ENCODE measurements at regions of chr5 and their contacts with region 1.

Region 1: GRCh38 chr5:76641514-76642120 is 18.4 kb upstream of the F2RL2 start:
- DNase-seq: peak; percentile 16 to 78 (median 67)
- ATAC-seq: peak; percentile 54
- H3K4me3 ChIP-seq: no peak overlapping the region
- H3K4me3 Mint-ChIP-seq: no peak overlapping the region
- H3K27ac ChIP-seq: no peak overlapping the region
- H3K27ac Mint-ChIP-seq: no peak overlapping the region
- H3K4me1 ChIP-seq: no peaks in the 10 kb centered on the region
- H3K4me1 Mint-ChIP-seq: no peaks in the 10 kb centered on the region
- H3K27me3 ChIP-seq: no peaks in the 10 kb centered on the region
- H3K27me3 Mint-ChIP-seq: no peaks in the 10 kb centered on the region
- CTCF ChIP-seq: peak; percentile 74

Region 2: GRCh38 chr5:75734913-75735789 is 906.5 kb before region 1 on chr5:
- CTCF ChIA-PET with region 1: no interaction called
- POLR2A ChIA-PET with region 1: no interaction called
- intact Hi-C with region 1: loop called in 1 of 2 experiments (anchors 10 kb)
- DNase-seq: peak in 2 of 9 experiments; percentile 25 to 39
- ATAC-seq: no peak
- H3K4me3 ChIP-seq: no peak overlapping the region
- H3K4me3 Mint-ChIP-seq: no peak overlapping the region
- H3K27ac ChIP-seq: no peak overlapping the region
- H3K27ac Mint-ChIP-seq: no peak overlapping the region
- H3K4me1 ChIP-seq: no peaks in the 10 kb centered on the region
- H3K4me1 Mint-ChIP-seq: no peaks in the 10 kb centered on the region
- H3K27me3 ChIP-seq: no peaks in the 10 kb centered on the region
- H3K27me3 Mint-ChIP-seq: no peaks in the 10 kb centered on the region
- CTCF ChIP-seq: no peak

Region 3: DNA sequence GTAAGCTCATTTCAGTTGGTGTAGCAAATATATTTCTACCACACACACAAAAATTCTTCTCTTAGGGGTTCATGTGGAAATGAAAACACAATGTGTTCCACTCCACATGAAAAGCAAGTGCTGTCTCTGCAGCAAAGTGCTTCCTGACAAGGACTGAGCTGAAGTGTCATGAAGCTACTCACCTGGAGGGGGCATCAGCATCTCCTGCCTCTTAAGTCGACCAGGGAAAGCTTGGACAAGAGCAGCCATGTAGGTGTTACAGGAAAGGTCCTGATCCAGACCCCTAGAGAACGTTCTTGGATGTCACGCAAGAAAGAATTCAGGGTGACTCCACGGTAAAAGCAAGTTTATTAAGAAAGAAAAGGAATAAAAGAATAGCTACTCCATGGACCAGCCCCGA is 495.7 kb before region 1 on chr5:
- CTCF ChIA-PET with region 1: no interaction called
- POLR2A ChIA-PET with region 1: no interaction called
- intact Hi-C with region 1: loop called in 1 of 2 experiments (anchors 5 kb)
- DNase-seq: peak in 2 of 9 experiments; percentile 31 to 34
- ATAC-seq: no peak
- H3K4me3 ChIP-seq: no peak overlapping the region
- H3K4me3 Mint-ChIP-seq: no peak overlapping the region
- H3K27ac ChIP-seq: no peak overlapping the region
- H3K27ac Mint-ChIP-seq: no peak overlapping the region
- H3K4me1 ChIP-seq: no peaks in the 10 kb centered on the region
- H3K4me1 Mint-ChIP-seq: no peaks in the 10 kb centered on the region
- H3K27me3 ChIP-seq: no peaks in the 10 kb centered on the region
- H3K27me3 Mint-ChIP-seq: peaks cover 5% of the 10 kb centered on the region
- CTCF ChIP-seq: no peak

Region 4: DNA sequence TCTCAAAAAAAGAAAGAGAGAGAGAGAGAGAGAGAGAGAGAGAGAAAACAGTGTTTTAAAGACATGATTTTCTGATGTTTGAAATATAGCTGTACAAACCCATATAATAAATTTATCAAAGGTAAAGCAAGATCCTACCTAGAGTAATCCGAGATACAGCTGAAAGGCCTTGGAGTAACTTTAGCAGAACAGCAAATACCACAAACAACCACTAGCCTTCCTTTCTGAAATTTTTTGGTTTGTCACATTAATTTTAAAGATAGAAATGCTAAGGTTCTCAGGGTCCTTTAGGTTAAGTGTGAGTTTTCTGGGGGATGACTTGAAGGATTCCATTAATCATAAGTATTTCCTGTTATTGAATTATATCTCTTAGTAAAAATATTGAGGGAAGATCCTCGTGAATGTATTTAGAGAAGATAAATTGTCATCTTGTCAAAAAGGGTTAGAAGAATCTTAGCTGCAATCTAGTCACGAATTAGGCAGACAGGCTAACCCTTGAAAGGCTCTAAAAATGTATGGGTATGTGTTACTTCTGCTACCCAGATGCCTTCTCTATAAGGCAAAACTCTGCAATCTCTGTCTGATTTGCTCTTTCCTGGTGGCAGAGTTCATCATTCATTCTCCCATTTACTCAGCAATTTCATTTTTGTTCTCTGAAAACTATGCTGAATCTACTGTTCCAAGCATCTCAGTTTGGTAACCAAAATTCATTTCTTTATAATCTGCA is 45.7 kb before region 1 on chr5:
- CTCF ChIA-PET with region 1: interaction called, 10 read pairs
- POLR2A ChIA-PET with region 1: no interaction called
- intact Hi-C with region 1: loop called (anchors 1 kb)
- DNase-seq: no peak
- ATAC-seq: no peak
- H3K4me3 ChIP-seq: no peak overlapping the region
- H3K4me3 Mint-ChIP-seq: no peak overlapping the region
- H3K27ac ChIP-seq: peak overlapping the region in 1 of 2 experiments; percentile 3
- H3K27ac Mint-ChIP-seq: peak overlapping the region; percentile 1
- H3K4me1 ChIP-seq: no peaks in the 10 kb centered on the region
- H3K4me1 Mint-ChIP-seq: no peaks in the 10 kb centered on the region
- H3K27me3 ChIP-seq: no peaks in the 10 kb centered on the region
- H3K27me3 Mint-ChIP-seq: no peaks in the 10 kb centered on the region
- CTCF ChIP-seq: no peak

Region 5: GRCh38 chr5:76652809-76653414 is 11.3 kb after region 1 on chr5:
- CTCF ChIA-PET with region 1: interaction called, 8 read pairs
- POLR2A ChIA-PET with region 1: interaction called, 4 read pairs
- intact Hi-C with region 1: loop called in 1 of 2 experiments (anchors 2 kb)
- DNase-seq: no peak
- ATAC-seq: no peak
- H3K4me3 ChIP-seq: no peak overlapping the region
- H3K4me3 Mint-ChIP-seq: no peak overlapping the region
- H3K27ac ChIP-seq: no peak overlapping the region
- H3K27ac Mint-ChIP-seq: no peak overlapping the region
- H3K4me1 ChIP-seq: no peaks in the 10 kb centered on the region
- H3K4me1 Mint-ChIP-seq: no peaks in the 10 kb centered on the region
- H3K27me3 ChIP-seq: no peaks in the 10 kb centered on the region
- H3K27me3 Mint-ChIP-seq: no peaks in the 10 kb centered on the region
- CTCF ChIP-seq: no peak

Region 6: DNA sequence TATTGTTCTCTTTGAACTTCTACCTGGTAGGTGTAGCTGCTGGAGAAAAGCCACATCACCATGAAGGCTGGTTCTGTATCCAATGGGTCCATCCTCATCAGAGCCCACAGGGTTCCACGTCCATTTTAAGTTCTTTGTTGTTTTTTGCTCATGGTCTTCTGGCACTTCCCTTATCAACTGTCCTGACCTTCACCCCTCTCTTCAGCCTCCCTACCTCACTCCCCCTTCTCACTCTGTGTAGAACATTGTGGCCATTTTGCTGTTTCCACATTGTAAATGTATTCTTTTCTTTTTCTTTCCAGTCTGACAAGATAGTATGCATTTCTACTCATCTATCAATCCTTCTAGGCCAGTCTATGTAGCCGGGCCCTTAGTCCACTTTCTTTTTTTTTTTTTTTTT is 25.9 kb after region 1 on chr5:
- CTCF ChIA-PET with region 1: no interaction called
- POLR2A ChIA-PET with region 1: no interaction called
- intact Hi-C with region 1: no loop called
- DNase-seq: no peak
- ATAC-seq: no peak
- H3K4me3 ChIP-seq: no peak overlapping the region
- H3K4me3 Mint-ChIP-seq: no peak overlapping the region
- H3K27ac ChIP-seq: no peak overlapping the region
- H3K27ac Mint-ChIP-seq: no peak overlapping the region
- H3K4me1 ChIP-seq: no peaks in the 10 kb centered on the region
- H3K4me1 Mint-ChIP-seq: no peaks in the 10 kb centered on the region
- H3K27me3 ChIP-seq: no peaks in the 10 kb centered on the region
- H3K27me3 Mint-ChIP-seq: no peaks in the 10 kb centered on the region
- CTCF ChIP-seq: no peak